ENCODE measurements at regions of chr3 and their contacts with region 1.

Region 1: DNA sequence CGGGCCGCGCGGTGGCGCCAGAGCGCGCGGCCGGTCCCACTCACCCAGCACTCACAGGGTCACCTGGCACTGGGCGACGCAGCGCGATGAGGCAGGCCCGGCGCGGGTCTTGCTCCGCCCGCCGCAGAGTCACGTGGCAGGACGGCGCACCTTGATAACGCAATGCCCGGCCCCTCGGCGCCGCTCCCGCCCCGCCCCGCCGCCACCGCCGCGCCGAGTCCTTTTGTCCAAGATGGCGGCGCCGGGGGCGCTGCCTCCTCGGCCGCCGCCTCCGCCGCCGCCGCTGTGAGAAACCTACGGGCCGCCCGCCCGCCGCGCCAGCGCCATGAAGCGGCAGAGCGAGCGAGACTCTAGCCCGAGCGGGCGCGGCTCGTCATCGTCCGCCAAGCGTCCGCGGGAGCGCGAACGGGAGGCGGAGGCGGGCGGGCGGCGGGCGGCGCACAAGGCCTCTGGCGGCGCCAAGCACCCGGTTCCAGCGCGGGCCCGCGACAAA is at the start of gene RBM15B:
- DNase-seq: peak; percentile 94 to 98 (median 97)
- ATAC-seq: peak; percentile 89
- H3K4me3 ChIP-seq: peak within 1 kb of the TSS; percentile 55 to 61
- H3K4me3 Mint-ChIP-seq: peak within 1 kb of the TSS; percentile 82
- H3K27ac ChIP-seq: peak within 1 kb of the TSS; percentile 71 to 88
- H3K27ac Mint-ChIP-seq: peak within 1 kb of the TSS; percentile 94
- H3K4me1 ChIP-seq: peaks cover 50% of the 10 kb centered on the region
- H3K4me1 Mint-ChIP-seq: peaks cover 68% of the 10 kb centered on the region
- H3K27me3 ChIP-seq: no peaks in the 10 kb centered on the region
- H3K27me3 Mint-ChIP-seq: no peaks in the 10 kb centered on the region
- CTCF ChIP-seq: peak; percentile 70
- total RNA-seq, gene RBM15B: 29.5 to 29.8 TPM

Region 2: GRCh38 chr3:50365080-50365841 is 1025.9 kb before region 1 on chr3:
- CTCF ChIA-PET with region 1: no interaction called
- POLR2A ChIA-PET with region 1: no interaction called
- intact Hi-C with region 1: loop called in 1 of 2 experiments (anchors 2 kb)
- DNase-seq: peak; percentile 89 to 98 (median 94)
- ATAC-seq: peak; percentile 95
- H3K4me3 ChIP-seq: peak overlapping the region; percentile 68 to 81
- H3K4me3 Mint-ChIP-seq: peak overlapping the region; percentile 87
- H3K27ac ChIP-seq: peak overlapping the region; percentile 91 to 92
- H3K27ac Mint-ChIP-seq: peak overlapping the region; percentile 95
- H3K4me1 ChIP-seq: peaks cover 20% of the 10 kb centered on the region
- H3K4me1 Mint-ChIP-seq: peaks cover 35% of the 10 kb centered on the region
- H3K27me3 ChIP-seq: no peaks in the 10 kb centered on the region
- H3K27me3 Mint-ChIP-seq: no peaks in the 10 kb centered on the region
- CTCF ChIP-seq: no peak

Region 3: DNA sequence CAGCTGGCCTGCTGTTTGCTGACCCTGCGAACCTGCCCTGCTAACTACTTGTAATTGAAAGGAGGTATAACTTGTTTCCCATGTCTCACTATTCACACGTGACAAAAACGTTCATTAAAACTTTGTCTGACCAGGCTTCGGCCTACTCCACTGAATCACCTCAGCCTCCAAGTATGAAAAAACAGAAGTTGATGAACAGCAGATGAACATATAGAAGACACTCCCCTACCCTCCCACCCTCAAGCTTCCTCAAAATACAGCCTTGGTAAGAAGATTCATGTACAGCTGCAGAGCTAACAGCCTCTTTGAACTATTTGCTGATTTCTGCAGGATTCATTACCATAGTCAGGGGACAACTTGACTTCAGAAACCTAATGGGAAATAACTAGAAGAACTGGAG is 10.6 kb after region 1 on chr3:
- CTCF ChIA-PET with region 1: interaction called, 15 read pairs
- POLR2A ChIA-PET with region 1: interaction called, 7 read pairs
- intact Hi-C with region 1: no loop called
- DNase-seq: no peak
- ATAC-seq: no peak
- H3K4me3 ChIP-seq: no peak overlapping the region
- H3K4me3 Mint-ChIP-seq: no peak overlapping the region
- H3K27ac ChIP-seq: no peak overlapping the region
- H3K27ac Mint-ChIP-seq: no peak overlapping the region
- H3K4me1 ChIP-seq: no peaks in the 10 kb centered on the region
- H3K4me1 Mint-ChIP-seq: peaks cover 23% of the 10 kb centered on the region
- H3K27me3 ChIP-seq: no peaks in the 10 kb centered on the region
- H3K27me3 Mint-ChIP-seq: no peaks in the 10 kb centered on the region
- CTCF ChIP-seq: no peak

Region 4: DNA sequence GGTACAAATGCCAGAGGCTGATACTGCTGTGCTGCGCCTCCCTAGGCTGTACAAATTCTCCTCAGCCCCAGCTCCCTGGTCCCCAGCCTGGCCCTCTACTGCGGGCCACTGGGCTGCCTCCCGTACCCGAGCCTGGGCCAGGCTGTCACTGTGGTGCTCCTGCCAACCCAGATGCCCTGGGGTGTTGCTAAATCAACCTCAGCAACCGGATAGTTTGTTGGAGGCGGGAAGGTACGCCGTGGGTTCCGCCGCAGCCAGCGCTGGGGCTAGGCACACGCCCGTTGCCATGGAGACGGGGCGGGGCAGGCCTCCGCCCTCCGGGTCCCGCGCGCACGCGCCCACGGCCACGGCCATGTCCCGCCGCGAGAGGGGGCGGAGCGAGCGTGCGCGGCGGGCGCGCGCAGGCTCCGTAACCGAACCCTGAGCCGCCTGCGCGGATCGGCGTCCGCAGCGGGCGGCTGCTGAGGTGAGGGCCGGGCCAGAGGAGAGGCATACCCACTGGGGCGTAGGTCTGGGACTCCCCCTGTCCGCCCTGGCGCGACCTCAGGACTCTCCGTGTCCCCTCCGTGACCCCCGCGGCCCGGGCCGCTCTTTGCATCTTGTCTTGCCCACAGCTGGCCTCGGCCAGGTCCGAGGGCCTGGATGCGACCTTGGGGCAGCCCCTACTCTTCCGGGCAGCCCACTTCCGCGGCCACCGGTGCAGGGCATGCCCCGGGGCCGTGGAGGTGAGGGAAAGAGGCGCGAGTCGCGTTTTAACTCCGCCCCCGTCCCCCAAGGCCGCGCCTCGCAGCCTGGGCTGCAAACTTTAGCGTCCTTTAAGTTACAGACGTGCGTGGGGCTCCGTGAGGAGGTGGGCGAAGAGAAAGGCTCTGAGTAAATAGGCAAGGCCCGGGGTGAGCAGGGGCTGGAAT is 280.0 kb after region 1 on chr3 and contains the start of gene TEX264:
- CTCF ChIA-PET with region 1: interaction called, 6 read pairs
- POLR2A ChIA-PET with region 1: interaction called, 3 read pairs
- intact Hi-C with region 1: loop called (anchors 1 kb)
- DNase-seq: peak; percentile 85 to 99 (median 95)
- ATAC-seq: peak; percentile 78
- H3K4me3 ChIP-seq: peak within 1 kb of the TSS; percentile 95 to 99
- H3K4me3 Mint-ChIP-seq: peak within 1 kb of the TSS; percentile 89
- H3K27ac ChIP-seq: peak within 1 kb of the TSS; percentile 67 to 92
- H3K27ac Mint-ChIP-seq: peak within 1 kb of the TSS; percentile 88
- H3K4me1 ChIP-seq: peaks cover 58% of the 10 kb centered on the region
- H3K4me1 Mint-ChIP-seq: peaks cover 63% of the 10 kb centered on the region
- H3K27me3 ChIP-seq: no peaks in the 10 kb centered on the region
- H3K27me3 Mint-ChIP-seq: no peaks in the 10 kb centered on the region
- CTCF ChIP-seq: no peak
- total RNA-seq, gene TEX264: 18.7 to 21.0 TPM

Region 5: DNA sequence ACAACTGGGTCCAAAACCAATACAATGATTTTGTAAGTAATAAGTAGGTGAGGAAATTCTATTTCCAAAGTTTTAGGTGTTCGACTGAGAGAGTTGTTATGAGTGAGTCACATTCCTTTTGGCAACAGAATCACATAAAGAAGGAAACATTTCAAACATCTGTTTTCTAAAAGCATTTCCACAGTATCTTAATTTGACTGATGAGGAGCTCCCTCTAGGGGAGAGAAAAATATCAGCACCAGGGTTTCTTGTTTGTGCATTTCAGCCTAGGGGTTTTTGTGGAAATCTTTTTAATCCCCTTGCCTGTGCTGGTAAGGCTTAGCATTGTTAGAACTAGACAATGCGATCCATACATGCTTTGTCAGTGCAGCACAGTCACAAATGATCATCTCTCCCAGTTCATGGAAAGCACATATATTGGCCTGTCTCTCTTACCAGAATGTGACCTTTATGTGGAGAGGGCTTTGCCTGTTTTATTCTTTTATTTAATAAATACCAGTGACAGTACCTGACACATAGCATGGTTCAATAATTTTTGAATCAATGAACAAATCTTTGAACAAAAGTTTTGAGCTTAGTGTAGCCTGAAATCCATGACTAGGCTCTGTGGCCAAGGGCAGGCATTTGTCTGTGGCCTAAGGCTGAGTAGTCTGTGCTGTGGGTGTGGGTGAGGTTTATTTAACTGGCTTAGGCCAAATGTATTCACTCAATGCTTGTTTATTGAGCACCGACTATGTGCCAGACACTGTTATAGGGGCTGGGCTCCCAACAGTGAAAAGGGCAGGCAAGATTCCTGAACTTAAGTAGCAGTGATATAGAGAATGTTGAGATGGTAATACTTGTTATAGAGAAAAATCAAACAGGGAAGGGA is 409.0 kb after region 1 on chr3:
- CTCF ChIA-PET with region 1: interaction called, 9 read pairs
- POLR2A ChIA-PET with region 1: no interaction called
- intact Hi-C with region 1: loop called (anchors 1 to 10 kb)
- DNase-seq: peak in 4 of 9 experiments; percentile 18 to 70 (median 52)
- ATAC-seq: peak; percentile 29
- H3K4me3 ChIP-seq: no peak overlapping the region
- H3K4me3 Mint-ChIP-seq: no peak overlapping the region
- H3K27ac ChIP-seq: no peak overlapping the region
- H3K27ac Mint-ChIP-seq: no peak overlapping the region
- H3K4me1 ChIP-seq: no peaks in the 10 kb centered on the region
- H3K4me1 Mint-ChIP-seq: peaks cover 17% of the 10 kb centered on the region
- H3K27me3 ChIP-seq: no peaks in the 10 kb centered on the region
- H3K27me3 Mint-ChIP-seq: peaks cover 12% of the 10 kb centered on the region
- CTCF ChIP-seq: peak; percentile 95

Region 6: DNA sequence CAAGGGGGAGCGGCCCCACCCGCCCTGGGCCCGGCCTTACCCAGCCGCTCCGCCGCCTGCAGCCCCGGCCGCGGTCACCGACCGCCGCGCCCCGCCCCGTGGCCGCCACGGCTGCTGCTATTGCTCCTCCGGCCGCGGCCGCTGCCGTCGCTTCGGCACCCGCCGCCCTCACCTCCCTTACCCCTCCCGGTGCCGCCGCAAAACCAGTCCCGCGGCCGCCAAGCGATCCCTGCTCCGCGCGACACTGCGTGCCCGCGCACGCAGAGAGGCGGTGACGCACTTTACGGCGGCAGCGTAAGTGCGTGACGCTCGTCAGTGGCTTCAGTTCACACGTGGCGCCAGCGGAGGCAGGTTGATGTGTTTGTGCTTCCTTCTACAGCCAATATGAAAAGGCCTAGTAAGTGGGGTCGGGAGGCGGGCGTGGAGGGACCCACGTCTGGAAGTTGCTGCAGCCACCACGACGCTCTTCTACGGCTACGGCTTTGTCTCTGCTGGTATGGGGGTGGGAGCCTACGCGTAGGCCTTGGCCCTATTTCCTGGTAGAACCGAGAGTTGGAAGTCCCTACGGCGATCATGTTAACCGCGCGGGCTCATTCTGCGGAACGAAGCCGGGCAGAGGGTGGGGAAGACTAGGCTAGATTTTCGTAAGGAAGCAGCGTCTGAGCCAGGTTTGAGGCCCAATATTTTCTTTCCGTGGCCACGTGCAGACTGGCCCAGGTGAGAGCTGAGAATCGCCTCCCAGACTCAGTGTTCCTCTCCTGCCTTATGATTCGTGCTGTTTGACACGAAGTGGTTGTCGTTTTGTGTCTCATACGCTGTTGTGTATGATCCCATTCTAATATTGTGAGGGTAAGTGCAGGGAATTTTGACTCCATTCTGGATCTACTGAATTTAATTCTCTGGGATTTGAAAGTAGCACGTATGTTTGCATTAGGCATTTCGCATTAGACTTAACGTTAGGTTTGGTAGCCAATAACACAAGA is 1294.9 kb after region 1 on chr3 and contains the starts of genes GNL3 and PBRM1:
- CTCF ChIA-PET with region 1: no interaction called
- POLR2A ChIA-PET with region 1: no interaction called
- intact Hi-C with region 1: loop called in 1 of 2 experiments (anchors 5 kb)
- DNase-seq: peak; percentile 85 to 98 (median 90)
- ATAC-seq: peak; percentile 90
- H3K4me3 ChIP-seq: peak within 1 kb of the TSS; percentile 63 to 83
- H3K4me3 Mint-ChIP-seq: peak within 1 kb of the TSS; percentile 99
- H3K27ac ChIP-seq: peak within 1 kb of the TSS; percentile 61 to 91
- H3K27ac Mint-ChIP-seq: peak within 1 kb of the TSS; percentile 98
- H3K4me1 ChIP-seq: peaks cover 22% of the 10 kb centered on the region
- H3K4me1 Mint-ChIP-seq: peaks cover 59% of the 10 kb centered on the region
- H3K27me3 ChIP-seq: no peaks in the 10 kb centered on the region
- H3K27me3 Mint-ChIP-seq: no peaks in the 10 kb centered on the region
- CTCF ChIP-seq: no peak
- total RNA-seq, gene GNL3: 110 to 113 TPM
- total RNA-seq, gene PBRM1: 45.9 to 49.2 TPM

Measured in CD8-positive, alpha-beta T cell (primary cell).